Activated B cell treated with CpG ODN at 0.5 μM for 24 hours (primary cell): ENCODE measurements at regions of chr18 and their contacts with region 1.

Region 1: GRCh38 chr18:35376742-35377695 is at the start of gene ZNF396:
- DNase-seq: peak; percentile 68
- ATAC-seq: peak; percentile 72
- H3K4me3 Mint-ChIP-seq: peak within 1 kb of the TSS; percentile 89
- H3K27ac Mint-ChIP-seq: peak within 1 kb of the TSS; percentile 47
- H3K4me1 Mint-ChIP-seq: peaks cover 11% of the 10 kb centered on the region
- H3K27me3 Mint-ChIP-seq: no peaks in the 10 kb centered on the region
- CTCF ChIP-seq: no peak
- total RNA-seq, gene ZNF396: 1.5 and 2.2 TPM in 2 replicates

Region 2: GRCh38 chr18:35122586-35123224 is 254.3 kb before region 1 on chr18:
- CTCF ChIA-PET with region 1: no interaction called
- POLR2A ChIA-PET with region 1: no interaction called
- intact Hi-C with region 1: no loop called
- DNase-seq: no peak
- ATAC-seq: peak; percentile 91
- H3K4me3 Mint-ChIP-seq: peak overlapping the region; percentile 4
- H3K27ac Mint-ChIP-seq: peak overlapping the region; percentile 46
- H3K4me1 Mint-ChIP-seq: peaks cover 45% of the 10 kb centered on the region
- H3K27me3 Mint-ChIP-seq: no peaks in the 10 kb centered on the region
- CTCF ChIP-seq: no peak

Region 3: DNA sequence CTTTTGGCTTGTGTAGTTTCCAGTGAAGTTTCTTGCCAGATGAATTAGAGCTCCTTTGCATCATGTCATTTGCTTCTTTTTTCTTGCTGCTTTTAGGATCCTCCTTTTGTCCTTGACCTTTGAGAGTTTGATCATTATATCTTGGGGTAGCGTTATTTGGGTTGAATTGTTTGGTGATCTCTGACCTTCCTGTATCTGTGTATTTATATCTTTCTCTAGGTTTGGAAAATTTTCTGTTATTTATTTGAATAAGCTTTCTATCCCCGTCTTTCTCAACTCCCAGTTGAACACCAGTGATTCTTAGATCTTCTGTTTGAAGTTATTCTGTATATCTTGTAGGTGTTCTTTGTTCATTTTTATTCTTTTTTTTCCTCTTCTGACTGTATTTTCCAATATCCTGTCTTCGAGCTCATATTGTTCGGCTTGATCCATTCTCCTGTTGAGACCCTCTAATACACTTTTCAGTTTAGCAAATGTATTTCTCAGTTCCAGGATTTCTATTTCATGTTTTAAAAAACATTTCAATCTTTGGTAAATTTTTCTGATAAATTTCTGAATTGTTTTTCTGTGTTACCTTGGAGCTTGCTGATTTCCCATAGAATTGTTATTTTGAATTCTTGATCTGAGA is 225.3 kb after region 1 on chr18:
- CTCF ChIA-PET with region 1: no interaction called
- POLR2A ChIA-PET with region 1: interaction called, 18 read pairs
- intact Hi-C with region 1: no loop called
- DNase-seq: no peak
- ATAC-seq: no peak
- H3K4me3 Mint-ChIP-seq: no peak overlapping the region
- H3K27ac Mint-ChIP-seq: no peak overlapping the region
- H3K4me1 Mint-ChIP-seq: peaks cover 46% of the 10 kb centered on the region
- H3K27me3 Mint-ChIP-seq: no peaks in the 10 kb centered on the region
- CTCF ChIP-seq: no peak